K562 (cell line): ENCODE measurements at regions of chr7 and their contacts with region 1.

Region 1: DNA sequence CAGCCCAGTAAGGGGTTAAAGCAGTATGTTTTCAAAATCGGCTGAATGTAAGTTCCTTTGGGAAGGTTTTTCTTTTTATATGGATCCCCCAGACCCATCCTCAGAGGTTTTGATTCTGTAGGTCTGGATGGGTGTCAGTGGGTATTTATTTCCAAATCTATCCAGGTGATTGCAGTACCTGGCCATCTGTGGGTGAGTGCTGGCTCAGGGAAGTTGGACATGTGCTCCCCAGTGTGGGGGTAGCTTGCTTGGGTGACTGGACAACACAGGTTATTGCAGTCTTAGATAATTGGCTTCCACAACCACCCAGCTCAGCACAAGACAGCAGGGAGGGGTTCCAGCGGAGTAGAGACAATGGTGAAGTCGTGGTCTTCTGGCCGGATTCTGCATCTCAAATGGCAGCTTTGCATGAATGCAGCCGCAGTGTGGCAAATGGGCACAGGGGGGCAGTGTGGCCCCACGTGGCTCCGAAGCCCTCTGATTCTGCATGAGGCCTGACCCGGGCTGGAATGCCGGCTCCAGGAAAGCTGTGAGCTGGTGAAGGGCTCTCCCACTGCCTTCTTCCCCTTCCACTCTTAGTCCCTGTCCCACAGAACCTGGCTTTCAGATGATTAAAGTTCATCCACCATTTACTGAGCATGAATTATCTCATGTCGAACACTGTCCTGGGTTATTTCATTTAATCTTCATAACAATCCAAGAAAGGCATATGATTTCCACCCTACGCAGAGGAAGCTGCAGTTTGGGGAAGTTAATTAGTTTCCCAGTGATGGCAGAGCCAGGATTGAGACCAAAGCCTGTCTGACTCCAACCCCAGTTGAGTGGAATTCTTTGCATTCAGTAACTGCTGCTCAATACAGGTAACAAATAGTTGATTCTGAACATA is 64.5 kb upstream of the SYPL1 start:
- DNase-seq: peak; percentile 90 to 92 (median 90)
- ATAC-seq: peak; percentile 95
- H3K4me3 ChIP-seq: no peak overlapping the region
- H3K27ac ChIP-seq: no peak overlapping the region
- H3K4me1 ChIP-seq: peaks cover 0 to 5% of the 10 kb centered on the region in 2 experiments; a peak in 3 of 5 replicates
- H3K27me3 ChIP-seq: no peaks in the 10 kb centered on the region
- CTCF ChIP-seq: peak; percentile 94 to 99 (median 99)
- EP300 ChIP-seq: no peak
- POLR2A ChIP-seq: no peak
- RAD21 ChIP-seq: peak; percentile 100

Region 2: GRCh38 chr7:106285051-106285854 is 108.6 kb after region 1 on chr7:
- CTCF ChIA-PET with region 1: no interaction called
- POLR2A ChIA-PET with region 1: interaction called, 3 read pairs
- in situ Hi-C with region 1: no loop called
- intact Hi-C with region 1: loop called (anchors 2 kb)
- DNase-seq: peak; percentile 98 to 100 (median 98)
- ATAC-seq: peak; percentile 87
- H3K4me3 ChIP-seq: peak overlapping the region; percentile 73
- H3K27ac ChIP-seq: peak overlapping the region; percentile 91
- H3K4me1 ChIP-seq: peaks cover 11 to 28% of the 10 kb centered on the region in 2 experiments
- H3K27me3 ChIP-seq: no peaks in the 10 kb centered on the region
- CTCF ChIP-seq: 0 out of 6 replicates have a peak, but pooled peaks of 1 of the 3 experiments have one; percentile 3
- EP300 ChIP-seq: peak; percentile 20; the same call in 1 of the 2 replicates
- POLR2A ChIP-seq: peak; percentile 94
- RAD21 ChIP-seq: peak in 1 of 2 experiments; percentile 18; a peak in 1 of 4 replicates

Region 3: GRCh38 chr7:106461993-106462859 is 285.6 kb after region 1 on chr7:
- CTCF ChIA-PET with region 1: interaction called, 23 read pairs
- POLR2A ChIA-PET with region 1: interaction called, 4 read pairs
- in situ Hi-C with region 1: loop called (anchors 5 kb)
- intact Hi-C with region 1: loop called (anchors 1 kb)
- DNase-seq: peak; percentile 55 to 71 (median 60)
- ATAC-seq: peak; percentile 81
- H3K4me3 ChIP-seq: no peak overlapping the region
- H3K27ac ChIP-seq: no peak overlapping the region
- H3K4me1 ChIP-seq: peaks cover 0 to 15% of the 10 kb centered on the region in 2 experiments; a peak in 3 of 5 replicates
- H3K27me3 ChIP-seq: no peaks in the 10 kb centered on the region
- CTCF ChIP-seq: peak; percentile 58 to 86 (median 62); a peak in 5 of 6 replicates
- EP300 ChIP-seq: no peak; the same call in 1 of the 2 replicates
- POLR2A ChIP-seq: no peak
- RAD21 ChIP-seq: peak; percentile 95 to 98

Region 4: DNA sequence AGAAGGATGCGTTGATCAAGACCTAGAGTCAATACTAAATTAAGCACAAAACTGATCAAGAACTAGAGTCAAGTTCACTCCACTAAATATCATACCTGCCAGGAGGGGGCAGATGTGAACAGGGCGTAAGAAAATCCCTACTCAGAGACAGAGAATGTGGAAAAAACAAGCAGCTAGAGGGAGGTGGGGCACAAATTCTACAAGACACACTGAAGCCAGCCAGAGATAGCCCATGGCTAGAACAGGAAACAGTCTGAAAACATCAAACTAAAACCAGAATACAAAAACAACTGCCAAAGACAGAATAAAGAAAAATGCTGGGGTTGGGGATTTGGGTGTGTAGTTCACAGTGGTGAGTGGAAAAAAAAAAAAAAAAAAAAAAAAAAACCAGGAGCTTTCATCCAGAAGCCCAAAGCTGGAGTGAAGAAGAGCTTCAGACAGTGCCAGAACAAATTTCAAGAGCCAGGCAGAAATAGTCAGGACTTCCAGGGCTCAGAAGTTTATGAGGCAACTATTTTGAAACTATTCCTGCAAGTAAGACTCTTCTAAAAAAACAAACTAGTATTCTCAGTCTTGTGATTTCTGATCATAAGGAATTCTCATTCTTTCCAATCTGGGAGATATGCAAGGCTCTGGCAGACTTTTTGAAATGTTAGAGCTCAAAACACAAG is 366.0 kb after region 1 on chr7:
- CTCF ChIA-PET with region 1: no interaction called
- POLR2A ChIA-PET with region 1: no interaction called
- in situ Hi-C with region 1: loop called (anchors 10 kb)
- intact Hi-C with region 1: loop called (anchors 1 kb)
- DNase-seq: peak; percentile 77 to 96 (median 84)
- ATAC-seq: peak; percentile 96
- H3K4me3 ChIP-seq: no peak overlapping the region
- H3K27ac ChIP-seq: peak overlapping the region; percentile 30
- H3K4me1 ChIP-seq: peaks cover 0 to 22% of the 10 kb centered on the region in 2 experiments; a peak in 2 of 5 replicates
- H3K27me3 ChIP-seq: no peaks in the 10 kb centered on the region
- CTCF ChIP-seq: peak; percentile 95 to 98 (median 98)
- EP300 ChIP-seq: peak; percentile 63
- POLR2A ChIP-seq: no peak
- RAD21 ChIP-seq: peak; percentile 100

Region 5: GRCh38 chr7:106744563-106745091 is 568.0 kb after region 1 on chr7:
- CTCF ChIA-PET with region 1: no interaction called
- POLR2A ChIA-PET with region 1: no interaction called
- in situ Hi-C with region 1: loop called (anchors 5 kb)
- intact Hi-C with region 1: no loop called
- DNase-seq: no peak
- ATAC-seq: peak; percentile 84
- H3K4me3 ChIP-seq: no peak overlapping the region
- H3K27ac ChIP-seq: no peak overlapping the region
- H3K4me1 ChIP-seq: peaks cover 0 to 2% of the 10 kb centered on the region in 2 experiments; a peak in 2 of 5 replicates
- H3K27me3 ChIP-seq: no peaks in the 10 kb centered on the region
- CTCF ChIP-seq: no peak
- EP300 ChIP-seq: no peak
- POLR2A ChIP-seq: no peak
- RAD21 ChIP-seq: no peak